CD4-positive, alpha-beta memory T cell (primary cell): ENCODE measurements at regions of chr19 and their contacts with region 1.

Region 1: DNA sequence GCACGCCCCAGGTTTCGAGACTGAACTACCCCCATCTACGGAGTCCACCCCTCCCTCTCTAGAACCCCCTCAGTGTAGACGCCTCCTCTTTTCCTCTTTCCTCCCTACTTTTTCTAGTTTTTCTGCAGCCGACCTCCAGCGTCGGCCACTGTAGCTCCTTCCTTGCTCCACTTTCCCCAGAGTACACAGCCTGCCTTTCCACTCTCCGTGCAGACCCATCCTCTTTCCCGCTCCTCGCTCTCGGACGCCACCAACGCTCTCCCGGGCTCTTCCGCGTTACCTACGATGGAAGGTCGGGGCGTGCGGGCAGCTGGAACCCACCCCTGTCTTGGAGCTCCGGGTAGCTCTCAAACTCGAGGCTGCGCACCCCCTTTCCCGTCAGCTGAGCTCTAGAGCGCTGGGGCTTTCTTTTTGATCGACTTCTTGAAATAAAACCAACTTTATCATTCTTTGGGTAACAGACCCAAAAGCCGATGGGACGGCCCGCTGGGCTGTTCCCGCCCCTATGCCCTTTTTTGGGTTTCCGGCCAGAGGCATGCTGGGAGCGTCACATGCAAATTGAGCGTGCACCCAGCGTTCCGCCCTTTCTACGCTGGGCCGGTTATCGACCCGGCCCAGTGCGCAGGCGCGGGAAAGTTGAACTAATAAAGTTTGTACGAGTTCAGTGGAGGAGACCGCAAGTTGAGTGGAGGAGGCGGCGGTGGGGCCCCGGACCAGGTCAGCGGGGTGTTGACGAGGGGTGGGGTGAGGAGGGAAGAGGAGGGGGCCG is at the starts of genes BCL2L12 and IRF3:
- DNase-seq: peak; percentile 99
- H3K4me3 ChIP-seq: peak within 1 kb of the TSS; percentile 99
- H3K4me3 Mint-ChIP-seq: peak within 1 kb of the TSS; percentile 95 to 100 (median 97)
- H3K27ac ChIP-seq: peak within 1 kb of the TSS; percentile 93
- H3K27ac Mint-ChIP-seq: peak within 1 kb of the TSS; percentile 95 to 100 (median 99)
- H3K4me1 ChIP-seq: peaks cover 31% of the 10 kb centered on the region
- H3K4me1 Mint-ChIP-seq: peaks cover 19 to 56% (median 31%) of the 10 kb centered on the region in 4 donors
- H3K27me3 ChIP-seq: no peaks in the 10 kb centered on the region
- H3K27me3 Mint-ChIP-seq: no peaks in the 10 kb centered on the region
- total RNA-seq, gene BCL2L12: 21.9 to 22.1 TPM
- total RNA-seq, gene IRF3: 366 to 386 TPM

Region 2: GRCh38 chr19:49502866-49503581 is 162.5 kb before region 1 on chr19:
- CTCF ChIA-PET with region 1: interaction called, 3 read pairs
- POLR2A ChIA-PET with region 1: interaction called, 10 read pairs
- intact Hi-C with region 1: no loop called
- DNase-seq: peak; percentile 65 to 79 (median 74)
- H3K4me3 ChIP-seq: no peak overlapping the region
- H3K4me3 Mint-ChIP-seq: peak overlapping the region; percentile 6 to 100 (median 36)
- H3K27ac ChIP-seq: peak overlapping the region; percentile 95
- H3K27ac Mint-ChIP-seq: peak overlapping the region; percentile 91 to 100 (median 99)
- H3K4me1 ChIP-seq: peaks cover 52% of the 10 kb centered on the region
- H3K4me1 Mint-ChIP-seq: peaks cover 16 to 61% (median 33%) of the 10 kb centered on the region in 4 donors
- H3K27me3 ChIP-seq: no peaks in the 10 kb centered on the region
- H3K27me3 Mint-ChIP-seq: no peaks in the 10 kb centered on the region

Region 3: DNA sequence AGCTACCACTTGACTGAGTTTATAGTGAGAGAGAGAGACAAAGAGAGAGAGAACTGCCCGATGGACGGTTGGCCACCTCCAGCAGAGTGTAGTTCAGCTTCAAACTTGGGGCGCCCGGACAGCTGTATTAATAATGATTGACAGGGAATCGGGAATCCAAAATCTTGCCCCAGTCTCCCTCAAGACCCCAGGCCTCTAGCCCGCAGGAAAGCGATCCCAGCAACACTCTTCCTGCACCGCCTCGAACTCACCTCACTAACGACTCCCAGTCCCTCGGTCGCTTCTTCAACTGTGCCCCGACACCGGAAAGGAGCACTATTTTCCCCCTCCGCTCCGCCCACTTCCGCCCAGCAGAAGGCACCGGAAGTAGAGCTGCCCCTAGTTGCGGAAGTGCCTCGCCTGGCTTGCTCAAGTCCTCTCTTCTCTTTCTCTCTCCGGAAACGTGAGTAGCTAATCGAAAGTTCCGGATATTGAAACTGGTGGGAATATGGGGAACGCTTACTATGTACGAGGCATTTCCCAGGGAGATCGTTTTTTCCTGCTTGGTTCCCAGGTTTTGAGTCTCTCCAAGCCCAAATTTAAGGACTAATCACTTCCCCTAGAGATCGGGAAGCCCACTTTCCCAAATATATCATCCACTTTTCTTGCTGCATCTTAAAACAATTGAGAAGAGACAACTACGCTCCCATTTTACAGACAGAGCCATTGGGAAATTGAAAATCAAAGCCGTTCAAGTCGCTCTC is 85.1 kb before region 1 on chr19 and contains the start of gene NOSIP:
- CTCF ChIA-PET with region 1: interaction called, 3 read pairs
- POLR2A ChIA-PET with region 1: interaction called, 24 read pairs
- intact Hi-C with region 1: no loop called
- DNase-seq: peak; percentile 94 to 97 (median 95)
- H3K4me3 ChIP-seq: peak within 1 kb of the TSS; percentile 54 to 99
- H3K4me3 Mint-ChIP-seq: peak within 1 kb of the TSS; percentile 90 to 97 (median 94)
- H3K27ac ChIP-seq: peak within 1 kb of the TSS; percentile 80
- H3K27ac Mint-ChIP-seq: peak within 1 kb of the TSS; percentile 85 to 96 (median 94)
- H3K4me1 ChIP-seq: peaks cover 31% of the 10 kb centered on the region
- H3K4me1 Mint-ChIP-seq: peaks cover 21 to 40% (median 28%) of the 10 kb centered on the region in 4 donors
- H3K27me3 ChIP-seq: no peaks in the 10 kb centered on the region
- H3K27me3 Mint-ChIP-seq: no peaks in the 10 kb centered on the region
- total RNA-seq, gene NOSIP: 177 to 191 TPM

Region 4: GRCh38 chr19:49590071-49590970 is 75.2 kb before region 1 on chr19:
- CTCF ChIA-PET with region 1: no interaction called
- POLR2A ChIA-PET with region 1: interaction called, 38 read pairs
- intact Hi-C with region 1: loop called (anchors 1 kb)
- DNase-seq: peak; percentile 94 to 96 (median 95)
- H3K4me3 ChIP-seq: peak overlapping the region; percentile 68 to 95
- H3K4me3 Mint-ChIP-seq: peak overlapping the region; percentile 81 to 95 (median 93)
- H3K27ac ChIP-seq: peak overlapping the region; percentile 74
- H3K27ac Mint-ChIP-seq: peak overlapping the region; percentile 84 to 97 (median 94)
- H3K4me1 ChIP-seq: peaks cover 23% of the 10 kb centered on the region
- H3K4me1 Mint-ChIP-seq: peaks cover 21 to 48% (median 31%) of the 10 kb centered on the region in 4 donors
- H3K27me3 ChIP-seq: no peaks in the 10 kb centered on the region
- H3K27me3 Mint-ChIP-seq: no peaks in the 10 kb centered on the region

Region 5: DNA sequence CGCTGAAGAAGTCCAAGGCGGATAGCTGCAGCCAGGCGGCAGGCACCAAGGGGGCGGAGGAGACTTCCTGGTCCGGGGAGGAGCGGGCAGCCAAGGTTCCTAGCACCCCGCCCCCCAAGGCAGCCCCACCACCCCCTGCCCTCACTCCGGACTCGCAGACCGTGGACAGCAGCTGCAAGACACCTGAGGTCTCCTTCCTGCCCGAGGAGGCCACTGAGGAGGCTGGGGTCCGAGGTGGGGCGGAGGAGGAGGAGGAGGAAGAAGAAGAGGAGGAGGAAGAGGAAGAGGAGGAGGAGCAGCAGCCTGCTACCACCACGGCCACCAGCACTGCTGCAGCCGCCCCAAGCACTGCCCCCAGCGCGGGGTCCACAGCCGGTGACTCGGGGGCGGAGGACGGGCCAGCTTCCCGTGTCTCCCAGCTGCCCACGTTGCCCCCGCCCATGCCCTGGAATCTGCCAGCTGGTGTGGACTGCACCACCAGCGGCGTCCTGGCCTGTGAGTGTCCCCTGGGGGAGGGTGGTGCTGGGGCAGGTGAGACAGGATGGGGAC is 12.2 kb before region 1 on chr19:
- CTCF ChIA-PET with region 1: no interaction called
- POLR2A ChIA-PET with region 1: interaction called, 30 read pairs
- intact Hi-C with region 1: no loop called
- DNase-seq: peak in 1 of 5 donors; percentile 39
- H3K4me3 ChIP-seq: no peak overlapping the region
- H3K4me3 Mint-ChIP-seq: no peak overlapping the region
- H3K27ac ChIP-seq: no peak overlapping the region
- H3K27ac Mint-ChIP-seq: peak overlapping the region in 1 of 7 donors; percentile 51
- H3K4me1 ChIP-seq: no peaks in the 10 kb centered on the region
- H3K4me1 Mint-ChIP-seq: peaks cover 0 to 9% (median under 1%) of the 10 kb centered on the region in 4 donors
- H3K27me3 ChIP-seq: no peaks in the 10 kb centered on the region
- H3K27me3 Mint-ChIP-seq: no peaks in the 10 kb centered on the region